Activated T-helper 2 cell treated with anti-CD3 and anti-CD28 coated beads, Interferon-gamma antibody, Interleukin-2, Interleukin-4, amounts not matched to agents 10 μg/mL and 5 μg/mL and 100 μg/mL, durations not matched to agents 14 hours and 24 hours and 36 hours (primary cell): ENCODE measurements at regions of chr1 and their contacts with region 1.

Region 1: DNA sequence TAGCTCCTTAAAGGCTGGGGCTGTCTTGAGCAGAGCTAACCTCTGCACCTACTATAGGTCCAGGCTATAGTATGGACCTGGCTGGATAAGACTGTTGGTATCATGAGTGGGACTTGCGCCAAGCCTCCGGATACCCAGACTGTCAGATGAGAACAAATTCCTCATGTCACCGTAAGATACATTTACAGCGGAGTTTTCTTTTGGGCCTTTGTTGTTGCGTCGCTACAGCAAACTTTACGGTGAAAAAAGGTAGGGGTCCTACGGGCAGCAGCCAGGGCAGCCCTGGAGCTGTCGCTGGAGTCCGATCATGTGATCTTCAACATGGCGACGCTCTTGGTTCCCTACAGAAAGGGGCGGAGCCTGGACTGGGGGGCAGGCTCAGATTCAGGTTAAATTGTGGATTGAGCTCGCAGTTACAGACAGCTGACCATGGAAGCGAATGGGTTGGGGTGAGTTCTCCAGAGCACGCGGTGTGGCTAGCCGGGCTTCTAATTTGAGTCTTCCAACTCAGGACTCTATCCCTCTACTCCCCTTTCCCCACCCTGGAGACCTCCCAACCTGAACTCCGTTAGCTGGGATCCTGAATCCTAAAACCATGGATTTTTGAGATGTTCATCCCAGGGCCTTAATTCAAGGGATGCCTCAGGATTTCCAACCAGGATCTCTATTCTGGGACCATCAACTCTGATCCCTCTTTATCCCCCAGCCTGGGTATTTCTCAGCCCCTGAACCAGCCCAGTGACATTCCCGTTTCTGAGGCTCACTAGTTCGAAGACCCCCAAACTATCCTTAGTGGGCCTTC is at the start of gene UROD:
- DNase-seq: peak; percentile 89
- H3K4me3 Mint-ChIP-seq: peak within 1 kb of the TSS; percentile 78
- H3K27ac Mint-ChIP-seq: peak within 1 kb of the TSS; percentile 92
- H3K4me1 Mint-ChIP-seq: peaks cover 34% of the 10 kb centered on the region
- H3K27me3 Mint-ChIP-seq: no peaks in the 10 kb centered on the region
- total RNA-seq, gene UROD: 84.8 and 85.9 TPM in 2 replicates

Region 2: DNA sequence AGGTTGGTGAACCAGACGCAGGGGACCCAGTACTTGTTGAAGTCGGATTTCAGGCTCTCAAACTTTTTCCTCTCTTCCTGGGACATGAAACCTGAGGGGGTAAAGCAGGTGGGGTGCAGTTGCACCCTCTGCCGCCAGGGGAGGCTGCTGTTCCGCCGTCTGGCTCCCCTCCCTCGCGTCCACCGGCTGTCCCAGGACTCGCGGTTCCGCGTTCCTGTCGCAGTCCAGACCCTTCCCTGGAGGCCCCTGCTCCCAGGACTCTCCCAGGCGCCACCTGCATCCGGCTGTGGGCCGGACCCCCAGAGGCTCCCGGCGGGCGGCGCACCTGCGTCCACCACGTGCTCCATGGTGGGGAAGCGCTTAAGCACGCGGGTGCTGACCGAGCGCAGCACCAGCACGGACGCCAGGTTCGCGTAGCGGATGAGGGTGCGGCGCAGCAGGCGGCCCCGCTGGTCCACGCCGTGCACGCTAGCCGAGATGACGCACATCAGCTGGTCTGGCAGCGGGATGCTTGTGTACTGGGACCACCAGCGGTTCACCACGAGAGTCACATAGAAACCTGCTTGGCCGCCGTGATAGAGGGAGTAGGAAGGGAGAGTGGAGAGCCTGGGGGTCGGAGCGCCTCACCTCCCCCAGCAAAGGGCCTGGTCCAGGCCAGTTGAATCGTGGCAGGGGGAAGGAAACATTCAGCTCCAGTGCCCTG is 225.7 kb before region 1 on chr1:
- intact Hi-C with region 1: loop called (anchors 5 kb)
- DNase-seq: peak; percentile 72
- H3K4me3 Mint-ChIP-seq: peak overlapping the region; percentile 72
- H3K27ac Mint-ChIP-seq: peak overlapping the region; percentile 80
- H3K4me1 Mint-ChIP-seq: peaks cover 29% of the 10 kb centered on the region
- H3K27me3 Mint-ChIP-seq: no peaks in the 10 kb centered on the region

Region 3: DNA sequence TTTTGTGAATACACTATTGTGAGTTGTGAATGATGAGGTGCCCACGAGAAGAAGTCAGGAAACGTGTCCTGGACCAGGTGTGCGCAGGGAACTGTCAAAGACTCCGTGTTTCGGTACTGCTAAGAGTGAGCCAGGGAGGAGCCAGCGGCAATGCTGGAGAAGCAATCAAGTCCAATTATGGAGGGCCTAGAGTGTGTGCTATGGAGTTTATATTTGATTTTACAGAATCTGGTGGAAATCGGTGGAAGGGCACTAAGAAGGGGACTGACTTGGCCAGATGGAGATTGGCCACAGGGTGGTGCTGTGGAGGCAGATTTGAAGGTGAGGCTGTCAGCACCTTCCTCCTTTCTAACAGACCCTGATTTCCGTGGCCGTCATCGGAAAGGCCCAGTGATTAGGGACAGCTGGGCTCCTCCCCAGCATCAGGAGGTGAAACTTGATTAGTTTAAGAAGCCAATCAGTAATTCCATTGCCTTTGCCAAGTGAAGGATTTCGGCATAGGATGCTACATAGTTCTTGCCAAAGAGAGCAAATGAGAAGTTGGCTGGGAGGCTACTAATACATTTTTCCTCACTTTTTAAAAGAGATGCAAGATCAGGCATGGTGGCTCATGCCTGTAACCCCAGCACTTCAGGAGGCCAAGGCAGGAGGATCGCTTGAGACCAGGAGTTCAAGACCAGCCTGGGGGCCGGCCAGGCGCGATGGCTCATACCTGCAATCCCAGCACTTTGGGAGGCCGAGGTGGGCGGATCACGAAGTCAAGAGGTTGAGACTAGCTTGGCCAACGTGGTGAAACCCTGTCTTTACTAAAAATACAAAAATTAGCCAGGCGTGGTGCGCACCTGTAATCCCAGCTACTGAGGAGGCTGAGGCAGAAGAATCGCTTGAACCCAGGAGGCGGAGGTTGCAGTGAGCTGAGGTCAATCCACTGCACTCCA is 176.0 kb before region 1 on chr1:
- intact Hi-C with region 1: loop called (anchors 2 kb)
- DNase-seq: peak; percentile 75
- H3K4me3 Mint-ChIP-seq: no peak overlapping the region
- H3K27ac Mint-ChIP-seq: no peak overlapping the region
- H3K4me1 Mint-ChIP-seq: peaks cover 12% of the 10 kb centered on the region
- H3K27me3 Mint-ChIP-seq: no peaks in the 10 kb centered on the region

Region 4: GRCh38 chr1:45303582-45304310 is 291.7 kb after region 1 on chr1:
- intact Hi-C with region 1: loop called (anchors 1 kb)
- DNase-seq: peak; percentile 89
- H3K4me3 Mint-ChIP-seq: peak overlapping the region; percentile 91
- H3K27ac Mint-ChIP-seq: peak overlapping the region; percentile 95
- H3K4me1 Mint-ChIP-seq: peaks cover 31% of the 10 kb centered on the region
- H3K27me3 Mint-ChIP-seq: no peaks in the 10 kb centered on the region

Region 5: DNA sequence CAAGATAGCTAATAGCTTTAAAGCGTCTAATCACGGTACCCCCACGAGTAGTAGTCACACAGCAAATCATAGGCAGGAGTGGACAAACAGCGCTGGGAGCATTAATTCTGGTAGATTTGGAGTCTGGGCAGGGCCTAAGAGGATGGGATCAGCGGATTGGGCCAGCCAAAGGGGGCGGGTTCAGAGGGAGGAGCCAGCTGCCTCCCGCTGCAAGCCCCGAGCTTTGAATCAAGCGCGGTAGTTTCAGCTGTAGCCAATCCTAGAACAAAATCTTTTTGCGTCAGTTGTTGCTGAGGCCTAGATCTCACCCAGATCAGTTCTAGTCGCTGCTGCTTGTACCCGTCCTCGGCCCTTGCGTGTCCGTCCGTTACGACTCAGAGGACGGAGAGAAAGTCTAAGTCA is 571.2 kb after region 1 on chr1:
- intact Hi-C with region 1: loop called (anchors 10 kb)
- DNase-seq: peak; percentile 92
- H3K4me3 Mint-ChIP-seq: peak overlapping the region; percentile 97
- H3K27ac Mint-ChIP-seq: peak overlapping the region; percentile 98
- H3K4me1 Mint-ChIP-seq: peaks cover 24% of the 10 kb centered on the region
- H3K27me3 Mint-ChIP-seq: no peaks in the 10 kb centered on the region